ENCODE measurements at regions of chr2 and their contacts with region 1.

Region 1: DNA sequence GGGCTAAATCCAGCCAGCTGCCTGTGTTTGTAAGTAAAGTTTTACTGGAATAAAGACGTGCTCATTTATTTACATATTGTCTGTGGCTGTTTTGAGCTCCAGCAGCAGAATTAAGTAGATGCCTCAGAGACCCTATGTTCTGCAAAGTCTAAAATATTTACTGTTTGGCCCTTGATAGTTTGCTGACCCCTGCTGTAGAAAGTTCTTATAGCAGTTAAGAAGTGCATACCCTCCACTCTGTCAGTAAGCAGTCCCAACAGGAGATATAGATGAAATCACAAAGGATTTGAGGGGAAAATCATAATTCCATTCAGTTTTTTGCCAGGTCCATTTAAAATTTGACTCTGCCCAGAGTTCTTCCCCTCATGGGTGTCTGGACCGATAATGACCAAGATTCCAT is 50.1 kb upstream of the ITM2C start:
- DNase-seq: peak; percentile 35
- H3K4me3 ChIP-seq: no peak overlapping the region
- H3K27ac ChIP-seq: no peak overlapping the region
- H3K4me1 ChIP-seq: no peaks in the 10 kb centered on the region
- H3K27me3 ChIP-seq: no peaks in the 10 kb centered on the region
- CTCF ChIP-seq: peak; percentile 14 to 16
- POLR2A ChIP-seq: no peak

Region 2: DNA sequence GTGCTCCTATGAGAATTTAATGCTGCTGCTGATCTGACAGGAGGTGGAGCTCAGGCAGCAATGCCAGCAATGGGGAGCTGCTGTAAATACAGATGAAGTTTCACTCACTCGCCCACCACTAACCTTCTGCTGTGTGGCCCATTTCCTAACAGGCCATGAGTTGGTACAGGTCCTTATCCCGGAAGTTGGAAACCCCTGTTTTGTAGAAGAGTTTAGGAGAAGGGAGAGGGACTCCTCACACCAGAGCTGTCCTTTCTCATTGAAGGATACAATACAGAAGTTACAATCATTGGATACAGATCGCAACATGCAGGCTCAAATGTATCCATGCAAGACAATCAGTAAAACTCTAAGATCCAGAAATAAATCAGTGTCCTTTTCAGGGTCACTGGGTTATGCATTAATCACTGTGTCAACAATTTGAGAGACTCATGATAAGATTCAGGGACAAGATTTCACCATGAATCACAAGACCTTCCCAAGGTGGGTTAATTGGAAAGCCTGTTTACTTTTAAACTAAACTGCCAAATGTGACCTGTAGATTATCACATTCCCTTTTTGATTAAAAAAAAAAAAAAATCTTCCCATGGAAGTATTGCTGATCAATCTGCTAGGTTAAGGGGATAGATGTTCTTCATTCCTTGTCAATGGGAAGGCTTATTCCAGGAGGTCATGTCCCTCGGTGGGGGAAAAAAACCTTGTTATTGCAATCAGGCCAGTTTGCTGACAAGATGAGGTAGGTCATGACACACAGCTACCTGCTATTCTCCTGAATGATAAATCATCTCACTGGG is 301.5 kb before region 1 on chr2:
- CTCF ChIA-PET with region 1: no interaction called
- POLR2A ChIA-PET with region 1: interaction called, 10 read pairs
- dilution Hi-C with region 1: no loop called
- intact Hi-C with region 1: no loop called
- DNase-seq: peak; percentile 12
- H3K4me3 ChIP-seq: no peak overlapping the region
- H3K27ac ChIP-seq: no peak overlapping the region
- H3K4me1 ChIP-seq: peaks cover 7% of the 10 kb centered on the region
- H3K27me3 ChIP-seq: no peaks in the 10 kb centered on the region
- CTCF ChIP-seq: no peak
- POLR2A ChIP-seq: no peak

Region 3: GRCh38 chr2:230830428-230830827 is 15.8 kb after region 1 on chr2:
- CTCF ChIA-PET with region 1: no interaction called
- POLR2A ChIA-PET with region 1: no interaction called
- dilution Hi-C with region 1: no loop called
- intact Hi-C with region 1: no loop called
- DNase-seq: no peak
- H3K4me3 ChIP-seq: no peak overlapping the region
- H3K27ac ChIP-seq: no peak overlapping the region
- H3K4me1 ChIP-seq: no peaks in the 10 kb centered on the region
- H3K27me3 ChIP-seq: peaks cover 11 to 27% of the 10 kb centered on the region in 2 experiments
- CTCF ChIP-seq: no peak
- POLR2A ChIP-seq: no peak

Region 4: GRCh38 chr2:230852113-230852512 is 37.5 kb after region 1 on chr2:
- CTCF ChIA-PET with region 1: no interaction called
- POLR2A ChIA-PET with region 1: no interaction called
- dilution Hi-C with region 1: no loop called
- intact Hi-C with region 1: no loop called
- DNase-seq: no peak
- H3K4me3 ChIP-seq: no peak overlapping the region
- H3K27ac ChIP-seq: no peak overlapping the region
- H3K4me1 ChIP-seq: no peaks in the 10 kb centered on the region
- H3K27me3 ChIP-seq: peaks cover 7 to 12% of the 10 kb centered on the region in 2 experiments
- CTCF ChIP-seq: no peak
- POLR2A ChIP-seq: no peak

Region 5: DNA sequence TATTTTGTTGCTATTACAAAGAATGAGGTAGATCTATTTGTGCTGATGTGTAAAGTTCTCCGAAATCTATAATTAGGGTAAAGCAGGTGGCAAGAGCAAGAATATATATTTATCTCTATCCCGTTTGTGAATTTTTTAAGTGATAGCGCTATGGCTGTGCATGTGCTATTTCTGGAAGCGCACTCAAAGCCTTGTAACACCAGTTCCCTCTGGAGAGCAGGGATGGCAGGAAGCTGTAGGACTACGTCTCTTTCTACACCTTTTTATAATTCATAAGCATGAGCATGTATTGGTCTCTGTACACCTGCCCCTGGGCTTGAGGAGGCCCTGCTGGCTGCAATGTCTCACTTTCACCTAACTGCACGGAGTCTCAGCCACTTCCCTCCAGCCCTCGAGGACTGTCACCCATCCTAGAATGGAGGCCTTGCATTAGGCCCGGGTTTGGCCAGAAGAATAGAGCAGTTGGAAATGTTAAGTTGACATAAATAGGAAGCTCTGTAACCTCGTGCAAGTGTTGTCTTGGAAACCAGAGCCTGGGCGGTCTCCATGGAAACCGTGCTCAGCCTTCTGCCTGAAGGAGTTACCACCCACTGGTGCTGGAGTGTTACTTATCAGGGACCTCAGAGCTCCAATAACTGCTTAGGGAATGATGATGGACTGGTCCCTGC is 71.0 kb after region 1 on chr2:
- CTCF ChIA-PET with region 1: no interaction called
- POLR2A ChIA-PET with region 1: no interaction called
- dilution Hi-C with region 1: no loop called
- intact Hi-C with region 1: no loop called
- DNase-seq: no peak
- H3K4me3 ChIP-seq: no peak overlapping the region
- H3K27ac ChIP-seq: no peak overlapping the region
- H3K4me1 ChIP-seq: no peaks in the 10 kb centered on the region
- H3K27me3 ChIP-seq: peaks cover 0 to 3% of the 10 kb centered on the region in 2 experiments
- CTCF ChIP-seq: no peak
- POLR2A ChIP-seq: no peak